Activated T-helper 1 cell treated with anti-CD3 and anti-CD28 coated beads, Interleukin-12 subunit alpha, Interleukin-12 subunit beta, Interleukin-2, Interleukin-4 antibody, amounts not matched to agents 30 ng/mL and 10 ng/mL and 1 ng/mL, durations not matched to agents 14 hours and 24 hours and 36 hours (primary cell): ENCODE measurements at regions of chr9 and their contacts with region 1.

Region 1: DNA sequence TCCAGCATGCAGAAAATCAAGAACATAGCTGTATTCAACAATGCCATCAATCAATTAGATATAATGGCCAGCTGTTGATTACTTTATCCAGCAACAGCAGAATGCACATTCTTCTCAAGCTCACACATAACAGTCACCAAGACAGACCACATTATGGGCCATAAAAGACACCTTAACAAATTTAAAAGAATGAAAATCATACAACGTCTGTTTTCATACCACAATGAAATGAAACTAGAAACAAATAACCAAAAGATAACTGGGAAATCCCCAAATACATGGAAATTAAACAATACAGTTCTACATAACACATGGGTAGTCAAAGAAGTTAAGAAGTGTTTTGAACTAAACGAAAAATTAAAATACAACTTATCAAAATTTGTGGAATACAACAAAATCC is 130.9 kb upstream of the GNA14 start:
- DNase-seq: no peak
- H3K4me3 Mint-ChIP-seq: peak overlapping the region; percentile 76
- H3K27ac Mint-ChIP-seq: peak overlapping the region; percentile 85
- H3K4me1 Mint-ChIP-seq: peaks cover 48% of the 10 kb centered on the region
- H3K27me3 Mint-ChIP-seq: no peaks in the 10 kb centered on the region

Region 2: DNA sequence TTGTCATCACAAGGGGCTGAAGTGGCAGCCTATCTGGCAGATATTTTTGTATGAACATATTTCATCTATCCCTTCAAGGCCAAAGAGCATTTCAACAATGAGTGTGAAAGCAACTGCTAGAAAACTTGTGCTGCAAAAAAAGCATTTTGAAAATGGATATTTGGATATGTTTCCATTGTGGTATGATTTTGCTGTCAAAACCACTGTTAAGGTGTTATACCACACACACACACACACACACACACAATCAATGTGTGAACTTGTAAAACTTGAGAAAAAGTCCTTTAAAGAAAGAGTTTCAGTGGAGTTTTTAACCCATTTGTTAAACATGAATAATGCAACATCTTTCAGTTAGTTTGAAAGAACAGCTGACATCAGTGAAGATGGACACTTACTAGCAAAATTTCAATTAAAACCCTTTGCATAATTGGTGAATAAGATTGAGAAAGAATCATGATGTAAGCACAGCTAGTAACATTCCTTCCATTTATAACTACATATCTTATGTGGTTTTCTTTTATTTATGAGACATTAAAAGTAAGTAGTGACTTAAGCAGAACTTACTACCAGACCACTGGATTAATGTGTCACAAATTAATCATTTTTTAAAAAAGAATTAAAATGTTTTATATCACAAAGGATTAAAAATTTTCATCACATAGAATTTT is 51.7 kb after region 1 on chr9:
- intact Hi-C with region 1: loop called (anchors 2 kb)
- DNase-seq: no peak
- H3K4me3 Mint-ChIP-seq: no peak overlapping the region
- H3K27ac Mint-ChIP-seq: peak overlapping the region; percentile 52
- H3K4me1 Mint-ChIP-seq: peaks cover 27% of the 10 kb centered on the region
- H3K27me3 Mint-ChIP-seq: no peaks in the 10 kb centered on the region